Panc1 (cell line): ENCODE measurements at regions of chr9 and their contacts with region 1.

Region 1: GRCh38 chr9:37485389-37486219 is at the start of gene POLR1E:
- DNase-seq: peak; percentile 75
- ATAC-seq: peak; percentile 98
- H3K4me3 ChIP-seq: peak within 1 kb of the TSS; percentile 67 to 96
- H3K27ac ChIP-seq: peak within 1 kb of the TSS; percentile 91
- H3K4me1 ChIP-seq: peaks cover 35% of the 10 kb centered on the region
- H3K27me3 ChIP-seq: no peaks in the 10 kb centered on the region
- CTCF ChIP-seq: no peak
- total RNA-seq, gene POLR1E: 93.8 TPM

Region 2: DNA sequence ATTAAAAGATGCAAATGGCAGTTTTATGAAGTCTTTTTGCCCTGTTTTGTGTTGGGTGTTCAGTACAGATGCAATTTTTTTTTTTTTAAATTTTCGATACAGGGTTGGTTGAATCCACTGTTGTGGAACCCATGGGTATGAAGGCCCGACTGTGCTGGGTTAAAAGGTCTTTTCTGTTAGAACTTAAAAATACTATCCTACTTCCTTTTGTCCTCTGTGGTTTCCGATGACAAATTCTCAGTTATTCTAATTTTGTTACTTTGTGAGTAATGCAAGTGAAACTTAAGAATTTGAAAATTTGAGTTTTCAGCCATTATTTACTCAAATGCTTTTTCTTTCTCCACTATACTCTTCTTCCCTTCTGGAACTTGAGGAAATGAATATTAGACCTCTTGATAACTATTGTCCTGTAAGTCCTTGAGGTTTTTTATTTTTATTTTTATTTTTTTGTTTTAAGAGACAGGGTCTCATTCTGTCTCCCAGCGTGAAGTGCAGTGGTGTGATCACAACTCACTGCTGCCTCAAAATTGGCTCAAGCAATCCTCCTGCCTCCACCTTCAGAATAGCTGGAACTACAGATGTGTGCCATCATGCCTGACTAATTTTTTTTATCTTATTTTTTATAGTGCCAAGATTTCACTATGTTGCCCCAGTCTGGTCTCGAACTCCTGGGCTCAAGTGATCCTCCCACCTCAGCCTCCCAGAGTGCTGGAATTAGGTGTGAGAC is 297.7 kb before region 1 on chr9:
- CTCF ChIA-PET with region 1: no interaction called
- POLR2A ChIA-PET with region 1: no interaction called
- in situ Hi-C with region 1: no loop called
- intact Hi-C with region 1: no loop called
- DNase-seq: no peak
- ATAC-seq: no peak
- H3K4me3 ChIP-seq: no peak overlapping the region
- H3K27ac ChIP-seq: no peak overlapping the region
- H3K4me1 ChIP-seq: no peaks in the 10 kb centered on the region
- H3K27me3 ChIP-seq: no peaks in the 10 kb centered on the region
- CTCF ChIP-seq: no peak

Region 3: DNA sequence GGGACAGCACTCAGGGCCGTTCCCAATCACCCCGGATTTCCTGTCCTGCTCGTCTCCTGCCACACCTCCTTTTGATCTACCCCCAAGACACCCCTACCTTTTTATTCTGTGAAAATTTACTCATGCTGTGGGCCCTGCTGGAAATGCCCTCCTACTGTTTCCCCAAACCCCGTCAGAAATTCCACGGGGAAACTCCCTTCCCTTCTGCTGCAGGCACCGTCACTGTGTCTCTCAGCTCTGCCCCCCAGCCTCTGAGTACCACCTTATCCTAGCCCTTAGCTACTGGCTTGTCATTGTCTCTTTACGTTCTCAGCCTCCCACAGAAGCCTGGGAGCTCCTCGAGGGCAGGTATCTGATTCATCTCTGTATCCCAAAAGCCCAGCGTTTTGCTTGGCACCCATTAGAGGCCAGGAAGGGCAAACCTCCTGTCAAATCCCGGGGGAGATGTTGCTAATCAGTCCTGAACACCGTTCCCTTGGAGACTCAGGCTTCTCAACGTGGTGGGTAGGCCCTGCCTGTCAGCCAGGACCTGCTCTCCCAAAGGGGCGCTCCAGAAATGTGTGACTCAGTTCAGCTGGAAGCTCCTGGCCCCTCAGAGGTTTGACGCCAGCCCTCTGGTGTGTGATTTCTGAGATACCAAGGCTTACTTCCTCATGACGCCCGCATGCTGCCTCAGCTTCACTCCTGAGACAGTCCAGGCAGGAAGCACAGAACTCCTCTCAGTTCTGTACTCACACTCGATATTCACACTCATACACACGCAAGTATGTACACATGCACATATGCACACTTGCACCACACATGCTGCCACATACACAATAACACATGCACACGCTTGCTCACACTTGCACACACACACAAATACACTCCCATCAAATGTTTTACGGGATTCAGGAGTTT is 113.8 kb before region 1 on chr9:
- CTCF ChIA-PET with region 1: no interaction called
- POLR2A ChIA-PET with region 1: no interaction called
- in situ Hi-C with region 1: no loop called
- intact Hi-C with region 1: no loop called
- DNase-seq: no peak
- ATAC-seq: 0 out of 2 replicates have a peak, but pooled peaks have one; percentile 16
- H3K4me3 ChIP-seq: no peak overlapping the region
- H3K27ac ChIP-seq: no peak overlapping the region
- H3K4me1 ChIP-seq: no peaks in the 10 kb centered on the region
- H3K27me3 ChIP-seq: 0 out of 2 replicates have a peak, but pooled peaks cover 2% of the 10 kb centered on the region
- CTCF ChIP-seq: no peak

Region 4: GRCh38 chr9:37465249-37466036 is 20.2 kb before region 1 on chr9 and contains the start of gene ZBTB5:
- CTCF ChIA-PET with region 1: no interaction called
- POLR2A ChIA-PET with region 1: interaction called, 20 read pairs
- in situ Hi-C with region 1: no loop called
- intact Hi-C with region 1: no loop called
- DNase-seq: peak; percentile 100
- ATAC-seq: peak; percentile 83
- H3K4me3 ChIP-seq: peak within 1 kb of the TSS; percentile 81 to 84
- H3K27ac ChIP-seq: peak within 1 kb of the TSS; percentile 100
- H3K4me1 ChIP-seq: peaks cover 18% of the 10 kb centered on the region
- H3K27me3 ChIP-seq: no peaks in the 10 kb centered on the region
- CTCF ChIP-seq: no peak
- total RNA-seq, gene ZBTB5: 30.6 TPM

Region 5: GRCh38 chr9:37511016-37512010 is 25.7 kb after region 1 on chr9:
- CTCF ChIA-PET with region 1: interaction called, 18 read pairs
- POLR2A ChIA-PET with region 1: interaction called, 6 read pairs
- in situ Hi-C with region 1: no loop called
- intact Hi-C with region 1: no loop called
- DNase-seq: no peak
- ATAC-seq: peak; percentile 60
- H3K4me3 ChIP-seq: no peak overlapping the region
- H3K27ac ChIP-seq: no peak overlapping the region
- H3K4me1 ChIP-seq: no peaks in the 10 kb centered on the region
- H3K27me3 ChIP-seq: no peaks in the 10 kb centered on the region
- CTCF ChIP-seq: no peak

Region 6: GRCh38 chr9:37582548-37583157 is 97.0 kb after region 1 on chr9:
- CTCF ChIA-PET with region 1: interaction called, 3 read pairs
- POLR2A ChIA-PET with region 1: no interaction called
- in situ Hi-C with region 1: no loop called
- intact Hi-C with region 1: loop called (anchors 5 kb)
- DNase-seq: peak; percentile 67
- ATAC-seq: peak; percentile 75
- H3K4me3 ChIP-seq: no peak overlapping the region
- H3K27ac ChIP-seq: no peak overlapping the region
- H3K4me1 ChIP-seq: peaks cover under 1% of the 10 kb centered on the region; the same call in 1 of the 2 replicates
- H3K27me3 ChIP-seq: no peaks in the 10 kb centered on the region
- CTCF ChIP-seq: peak; percentile 87